Activated T-helper 2 cell treated with anti-CD3 and anti-CD28 coated beads, Interferon-gamma antibody, Interleukin-2, Interleukin-4, amounts not matched to agents 10 μg/mL and 5 μg/mL and 100 μg/mL, durations not matched to agents 14 hours and 24 hours and 36 hours (primary cell): ENCODE measurements at regions of chr1 and their contacts with region 1.

Region 1: DNA sequence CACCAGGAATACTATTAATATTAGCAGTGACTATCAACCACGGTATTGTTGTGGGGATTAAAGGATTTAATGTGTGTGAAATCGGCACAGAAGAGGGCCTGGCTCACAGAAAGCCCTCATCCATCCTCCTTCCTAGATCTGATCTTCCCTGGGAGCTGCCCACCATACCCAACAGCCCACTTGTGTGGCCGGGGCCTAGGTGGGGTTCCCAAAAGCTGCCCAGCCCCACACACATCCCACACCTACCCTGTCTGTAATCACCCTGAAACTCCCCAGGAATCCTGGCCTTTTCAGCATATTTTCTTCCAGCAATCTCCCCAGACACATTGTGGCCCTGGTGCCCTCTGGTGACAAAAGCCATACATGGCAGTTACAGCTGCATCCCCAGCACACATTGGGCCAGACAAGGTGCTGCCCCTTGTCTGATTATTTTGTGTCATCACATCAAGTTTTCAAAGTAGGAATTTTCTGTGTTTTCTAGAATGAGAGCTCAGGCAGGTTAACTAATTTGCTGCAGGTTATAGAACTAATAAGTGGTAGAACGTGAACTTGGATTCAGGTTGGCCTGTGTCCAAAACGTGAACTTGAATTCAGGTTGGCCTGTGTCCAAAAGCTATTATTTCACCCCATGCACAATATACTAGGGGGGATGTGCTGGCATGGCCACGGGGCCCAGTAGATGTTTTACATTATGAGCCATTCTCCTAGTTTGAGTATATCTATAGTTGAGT is 5.3 kb upstream of the SLC6A9 start:
- DNase-seq: peak; percentile 36
- H3K4me3 Mint-ChIP-seq: no peak overlapping the region
- H3K27ac Mint-ChIP-seq: no peak overlapping the region
- H3K4me1 Mint-ChIP-seq: peaks cover 11% of the 10 kb centered on the region
- H3K27me3 Mint-ChIP-seq: peaks cover 7% of the 10 kb centered on the region

Region 2: GRCh38 chr1:44002606-44003157 is 33.9 kb before region 1 on chr1:
- intact Hi-C with region 1: loop called (anchors 1 kb)
- DNase-seq: no peak
- H3K4me3 Mint-ChIP-seq: no peak overlapping the region
- H3K27ac Mint-ChIP-seq: no peak overlapping the region
- H3K4me1 Mint-ChIP-seq: no peaks in the 10 kb centered on the region
- H3K27me3 Mint-ChIP-seq: no peaks in the 10 kb centered on the region